Transverse colon (tissue), 4 donors: ENCODE measurements at regions of chr4 and their contacts with region 1.

Region 1: GRCh38 chr4:76504613-76505465 is 69.8 kb downstream of the SHROOM3 start:
- DNase-seq: no peak
- H3K4me3 ChIP-seq: no peak overlapping the region
- H3K27ac ChIP-seq: no peak overlapping the region
- H3K4me1 ChIP-seq: no peaks in the 10 kb centered on the region
- H3K27me3 ChIP-seq: no peaks in the 10 kb centered on the region
- CTCF ChIP-seq: peak; percentile 60 to 76 (median 68)
- EP300 ChIP-seq: no peak
- POLR2A ChIP-seq: no peak

Region 2: DNA sequence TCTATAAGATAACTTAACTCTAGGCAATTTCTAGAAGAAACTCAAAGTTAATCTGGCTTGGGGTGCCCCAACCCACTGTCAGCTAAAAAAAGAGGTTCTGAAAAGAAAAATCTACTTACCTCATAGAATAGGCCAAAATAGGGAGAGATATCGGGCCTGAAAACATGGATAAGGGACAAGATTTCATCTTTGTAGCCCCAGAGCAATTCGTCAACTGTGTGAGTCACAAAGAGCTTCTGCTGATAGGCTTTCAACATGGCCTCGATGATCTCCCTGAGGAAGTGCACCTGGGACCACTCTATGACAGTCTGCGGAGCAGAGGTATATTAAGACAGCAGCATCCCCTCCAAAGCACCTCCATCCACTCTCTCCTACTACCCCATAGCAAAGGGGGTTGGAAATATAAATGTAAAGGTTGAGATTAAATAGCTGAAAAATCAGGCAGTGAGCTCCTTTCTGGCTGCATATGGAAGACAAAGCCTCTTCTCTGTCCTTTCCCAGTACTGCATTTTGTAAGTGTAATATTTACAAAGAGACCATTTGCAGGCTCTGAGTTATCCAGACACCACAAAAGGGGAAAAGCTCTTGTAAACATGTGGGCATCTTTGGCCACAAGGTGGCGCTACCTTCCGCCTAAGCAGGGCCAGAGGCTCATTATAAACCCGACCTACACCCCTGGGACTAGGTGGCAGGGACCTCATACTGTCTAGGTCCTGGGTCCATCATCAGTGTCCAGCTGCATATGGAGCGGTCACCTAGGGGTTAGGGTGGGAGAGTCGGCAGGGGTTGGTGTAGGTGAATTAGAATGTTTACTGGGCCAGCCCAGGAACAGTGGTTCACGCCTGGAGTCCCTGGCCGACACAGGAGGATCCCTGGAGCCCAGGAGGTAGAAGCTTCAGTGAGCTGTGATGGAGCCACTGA is 325.2 kb before region 1 on chr4:
- in situ Hi-C with region 1: loop called in 2 of 4 experiments (anchors 5 to 25 kb)
- intact Hi-C with region 1: no loop called
- DNase-seq: peak; percentile 91
- H3K4me3 ChIP-seq: no peak overlapping the region
- H3K27ac ChIP-seq: no peak overlapping the region
- H3K4me1 ChIP-seq: peaks cover 0 to 9% (median 0%) of the 10 kb centered on the region in 4 donors
- H3K27me3 ChIP-seq: no peaks in the 10 kb centered on the region
- CTCF ChIP-seq: peak; percentile 84 to 93 (median 92)
- EP300 ChIP-seq: no peak
- POLR2A ChIP-seq: no peak

Region 3: GRCh38 chr4:76430519-76431388 is 74.1 kb before region 1 on chr4:
- in situ Hi-C with region 1: loop called in 2 of 4 experiments (anchors 5 kb)
- intact Hi-C with region 1: loop called (anchors 5 kb)
- DNase-seq: no peak
- H3K4me3 ChIP-seq: no peak overlapping the region
- H3K27ac ChIP-seq: no peak overlapping the region
- H3K4me1 ChIP-seq: peaks cover 0 to 4% (median 0%) of the 10 kb centered on the region in 4 donors
- H3K27me3 ChIP-seq: no peaks in the 10 kb centered on the region
- CTCF ChIP-seq: peak; percentile 63 to 73 (median 68)
- EP300 ChIP-seq: no peak
- POLR2A ChIP-seq: no peak

Region 4: GRCh38 chr4:76758290-76758882 is 253.5 kb after region 1 on chr4:
- in situ Hi-C with region 1: loop called in 3 of 4 experiments (anchors 5 to 25 kb)
- intact Hi-C with region 1: no loop called
- DNase-seq: no peak
- H3K4me3 ChIP-seq: no peak overlapping the region
- H3K27ac ChIP-seq: no peak overlapping the region
- H3K4me1 ChIP-seq: peaks cover 0 to 16% (median 0%) of the 10 kb centered on the region in 4 donors
- H3K27me3 ChIP-seq: no peaks in the 10 kb centered on the region
- CTCF ChIP-seq: peak; percentile 69 to 84 (median 71)
- EP300 ChIP-seq: no peak
- POLR2A ChIP-seq: no peak

Region 5: DNA sequence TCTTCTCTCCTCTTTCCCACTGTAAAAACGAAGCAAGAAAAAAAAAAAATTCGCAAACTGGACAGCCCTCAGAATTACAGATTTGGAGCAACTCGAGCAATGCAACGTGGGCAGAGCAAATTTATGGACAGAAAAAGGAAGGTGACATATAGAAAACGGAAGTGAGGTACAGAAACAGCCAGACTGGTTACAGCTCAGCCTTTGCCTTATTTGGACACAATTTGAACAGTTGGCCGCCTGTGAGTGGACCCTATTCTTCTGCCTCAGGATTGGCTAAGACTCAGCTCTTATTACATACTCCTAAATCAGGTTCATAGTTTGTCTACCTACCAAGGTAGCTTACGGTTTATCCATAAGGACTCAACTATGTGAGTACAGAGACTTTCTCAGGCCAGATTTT is 294.3 kb after region 1 on chr4:
- in situ Hi-C with region 1: no loop called
- intact Hi-C with region 1: no loop called
- DNase-seq: no peak
- H3K4me3 ChIP-seq: no peak overlapping the region
- H3K27ac ChIP-seq: no peak overlapping the region
- H3K4me1 ChIP-seq: no peaks in the 10 kb centered on the region
- H3K27me3 ChIP-seq: no peaks in the 10 kb centered on the region
- CTCF ChIP-seq: no peak
- EP300 ChIP-seq: no peak
- POLR2A ChIP-seq: no peak

Region 6: DNA sequence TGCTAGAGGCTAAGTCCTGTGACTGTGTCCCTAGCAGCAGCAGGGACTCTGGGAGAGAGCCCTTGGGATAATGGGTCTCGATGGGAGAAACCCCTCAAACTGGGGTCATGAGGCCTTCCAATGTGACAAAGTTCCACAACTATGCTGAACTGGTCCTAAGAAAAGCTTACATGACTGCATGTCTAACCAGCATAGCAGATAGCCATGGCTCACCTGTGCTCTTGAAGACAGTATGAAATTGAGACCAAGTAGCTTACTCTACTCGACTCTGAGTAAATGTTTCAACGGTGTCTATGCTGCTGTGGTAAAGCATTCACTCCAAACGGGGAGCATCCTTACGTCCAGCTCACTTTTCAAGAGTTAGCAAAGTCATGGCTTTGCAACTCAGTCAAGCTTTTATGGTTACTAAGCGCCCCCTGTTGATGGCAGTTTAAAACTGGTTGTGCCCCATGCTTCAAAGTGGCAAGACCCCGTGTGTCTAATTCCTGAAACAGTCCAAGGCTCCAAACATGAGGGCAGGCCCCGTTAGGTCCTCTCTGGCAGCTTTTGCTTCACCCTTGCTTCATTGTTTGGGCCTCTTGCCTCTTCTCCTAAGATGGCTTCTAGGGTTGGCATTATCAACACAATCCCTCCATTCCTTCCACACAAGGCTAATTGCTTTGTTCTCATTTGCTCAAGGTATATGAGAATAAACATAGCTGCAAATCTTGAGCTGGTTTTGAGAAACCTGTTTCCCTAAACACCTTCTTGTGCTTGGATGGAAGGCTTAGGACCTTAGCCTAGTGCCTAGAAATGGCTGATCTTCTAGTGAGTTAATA is 698.8 kb after region 1 on chr4:
- in situ Hi-C with region 1: loop called in 2 of 4 experiments (anchors 25 kb)
- intact Hi-C with region 1: loop called (anchors 10 kb)
- DNase-seq: peak; percentile 64
- H3K4me3 ChIP-seq: no peak overlapping the region
- H3K27ac ChIP-seq: no peak overlapping the region
- H3K4me1 ChIP-seq: peaks cover 0 to 5% (median 2%) of the 10 kb centered on the region in 4 donors
- H3K27me3 ChIP-seq: no peaks in the 10 kb centered on the region
- CTCF ChIP-seq: peak; percentile 68 to 81 (median 74)
- EP300 ChIP-seq: no peak
- POLR2A ChIP-seq: no peak